ENCODE measurements at regions of chr17 and their contacts with region 1.

Region 1: DNA sequence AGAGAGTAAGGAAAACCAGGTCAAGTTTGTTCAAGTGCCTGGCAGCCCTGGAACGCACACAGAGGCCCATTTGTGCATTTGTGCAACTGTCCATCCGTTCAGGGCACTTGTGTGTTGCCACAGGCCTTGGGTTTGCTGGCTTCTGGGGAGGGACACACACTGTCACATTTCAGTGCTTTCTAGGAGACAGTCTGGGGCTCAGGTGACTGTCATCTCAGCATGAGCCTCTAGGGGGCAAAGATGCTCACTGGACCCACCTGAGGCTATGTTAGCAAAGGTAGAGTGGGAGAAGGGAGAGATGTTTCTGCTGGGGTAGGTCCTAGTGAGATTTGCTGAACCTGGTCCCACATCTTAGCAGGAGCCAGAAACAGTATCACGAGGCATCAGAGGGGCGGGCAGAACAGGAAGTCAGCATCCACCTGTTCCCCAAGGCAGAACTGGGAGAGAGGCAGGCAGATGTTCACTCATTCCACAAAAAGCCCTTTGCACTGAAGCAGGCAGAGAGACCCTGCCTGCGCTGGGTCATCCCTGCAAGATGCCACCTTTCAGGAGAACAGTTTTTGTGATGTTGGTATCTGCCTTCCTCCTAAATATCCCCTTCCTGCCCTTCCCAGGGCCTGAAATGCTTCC is 48.5 kb downstream of the RAI1 start:
- DNase-seq: peak; percentile 35 to 78 (median 60)
- ATAC-seq: peak; percentile 83
- H3K4me3 ChIP-seq: no peak overlapping the region
- H3K4me3 Mint-ChIP-seq: no peak overlapping the region
- H3K27ac ChIP-seq: no peak overlapping the region
- H3K27ac Mint-ChIP-seq: peak overlapping the region; percentile 40
- H3K4me1 ChIP-seq: peaks cover 20% of the 10 kb centered on the region
- H3K4me1 Mint-ChIP-seq: peaks cover 26% of the 10 kb centered on the region
- H3K27me3 ChIP-seq: no peaks in the 10 kb centered on the region
- H3K27me3 Mint-ChIP-seq: no peaks in the 10 kb centered on the region
- CTCF ChIP-seq: peak; percentile 77

Region 2: GRCh38 chr17:17701658-17702057 is 28.1 kb before region 1 on chr17:
- CTCF ChIA-PET with region 1: no interaction called
- POLR2A ChIA-PET with region 1: no interaction called
- intact Hi-C with region 1: no loop called
- DNase-seq: no peak
- ATAC-seq: no peak
- H3K4me3 ChIP-seq: no peak overlapping the region
- H3K4me3 Mint-ChIP-seq: no peak overlapping the region
- H3K27ac ChIP-seq: no peak overlapping the region
- H3K27ac Mint-ChIP-seq: no peak overlapping the region
- H3K4me1 ChIP-seq: peaks cover 13% of the 10 kb centered on the region
- H3K4me1 Mint-ChIP-seq: peaks cover 7% of the 10 kb centered on the region
- H3K27me3 ChIP-seq: no peaks in the 10 kb centered on the region
- H3K27me3 Mint-ChIP-seq: no peaks in the 10 kb centered on the region
- CTCF ChIP-seq: no peak

Region 3: GRCh38 chr17:17716837-17717523 is 12.8 kb before region 1 on chr17:
- CTCF ChIA-PET with region 1: no interaction called
- POLR2A ChIA-PET with region 1: no interaction called
- intact Hi-C with region 1: no loop called
- DNase-seq: no peak
- ATAC-seq: no peak
- H3K4me3 ChIP-seq: no peak overlapping the region
- H3K4me3 Mint-ChIP-seq: no peak overlapping the region
- H3K27ac ChIP-seq: no peak overlapping the region
- H3K27ac Mint-ChIP-seq: no peak overlapping the region
- H3K4me1 ChIP-seq: peaks cover 18% of the 10 kb centered on the region
- H3K4me1 Mint-ChIP-seq: peaks cover 48% of the 10 kb centered on the region
- H3K27me3 ChIP-seq: peaks cover 4 to 10% of the 10 kb centered on the region in 2 experiments
- H3K27me3 Mint-ChIP-seq: peaks cover 27% of the 10 kb centered on the region
- CTCF ChIP-seq: no peak

Region 4: DNA sequence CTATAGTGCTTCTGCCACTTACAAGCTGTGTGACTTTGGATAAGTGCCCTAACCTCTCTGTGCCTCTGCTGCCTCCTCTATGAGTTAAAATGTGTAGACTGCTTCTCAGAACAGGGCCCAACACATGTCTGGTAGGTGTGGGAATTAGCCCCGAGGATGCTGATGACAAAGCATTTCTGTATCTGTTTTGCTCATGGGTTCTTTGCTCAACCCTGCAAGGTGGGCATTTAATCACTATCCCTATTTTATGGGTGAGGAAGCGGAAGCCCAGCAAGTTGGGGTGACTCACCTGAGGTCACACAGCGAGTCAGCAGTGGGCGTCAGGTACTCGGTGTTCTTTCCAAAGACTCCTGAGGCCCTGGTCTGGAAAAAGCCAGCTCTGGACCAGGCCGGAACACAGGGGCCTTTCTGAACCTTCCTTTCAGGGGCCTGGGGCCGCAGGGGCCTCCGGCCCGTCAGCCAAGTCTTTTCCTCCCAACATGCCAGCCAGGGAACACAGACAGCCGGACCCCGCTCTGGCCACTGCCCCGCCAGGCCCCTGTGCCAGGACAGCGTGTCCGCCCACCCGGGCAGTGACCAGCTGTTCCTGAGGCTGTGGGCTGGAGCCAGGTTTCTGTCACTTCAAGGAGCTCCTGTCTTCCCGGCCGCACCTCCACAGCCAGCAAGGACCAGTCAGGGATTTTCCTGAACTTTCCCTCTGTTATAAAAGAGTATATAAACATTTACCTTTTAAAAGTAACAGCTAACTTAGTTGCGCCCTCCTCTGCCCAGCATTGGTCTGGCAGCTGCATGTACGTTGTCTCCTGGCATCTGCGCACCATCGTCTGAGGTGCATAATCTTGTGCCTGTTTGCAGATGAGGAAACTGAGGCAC is 44.5 kb after region 1 on chr17:
- CTCF ChIA-PET with region 1: no interaction called
- POLR2A ChIA-PET with region 1: no interaction called
- intact Hi-C with region 1: loop called in 1 of 2 experiments (anchors 5 kb)
- DNase-seq: peak in 1 of 14 experiments; percentile 32
- ATAC-seq: no peak
- H3K4me3 ChIP-seq: no peak overlapping the region
- H3K4me3 Mint-ChIP-seq: no peak overlapping the region
- H3K27ac ChIP-seq: no peak overlapping the region
- H3K27ac Mint-ChIP-seq: no peak overlapping the region
- H3K4me1 ChIP-seq: no peaks in the 10 kb centered on the region
- H3K4me1 Mint-ChIP-seq: no peaks in the 10 kb centered on the region
- H3K27me3 ChIP-seq: no peaks in the 10 kb centered on the region
- H3K27me3 Mint-ChIP-seq: no peaks in the 10 kb centered on the region
- CTCF ChIP-seq: peak; percentile 28

Region 5: DNA sequence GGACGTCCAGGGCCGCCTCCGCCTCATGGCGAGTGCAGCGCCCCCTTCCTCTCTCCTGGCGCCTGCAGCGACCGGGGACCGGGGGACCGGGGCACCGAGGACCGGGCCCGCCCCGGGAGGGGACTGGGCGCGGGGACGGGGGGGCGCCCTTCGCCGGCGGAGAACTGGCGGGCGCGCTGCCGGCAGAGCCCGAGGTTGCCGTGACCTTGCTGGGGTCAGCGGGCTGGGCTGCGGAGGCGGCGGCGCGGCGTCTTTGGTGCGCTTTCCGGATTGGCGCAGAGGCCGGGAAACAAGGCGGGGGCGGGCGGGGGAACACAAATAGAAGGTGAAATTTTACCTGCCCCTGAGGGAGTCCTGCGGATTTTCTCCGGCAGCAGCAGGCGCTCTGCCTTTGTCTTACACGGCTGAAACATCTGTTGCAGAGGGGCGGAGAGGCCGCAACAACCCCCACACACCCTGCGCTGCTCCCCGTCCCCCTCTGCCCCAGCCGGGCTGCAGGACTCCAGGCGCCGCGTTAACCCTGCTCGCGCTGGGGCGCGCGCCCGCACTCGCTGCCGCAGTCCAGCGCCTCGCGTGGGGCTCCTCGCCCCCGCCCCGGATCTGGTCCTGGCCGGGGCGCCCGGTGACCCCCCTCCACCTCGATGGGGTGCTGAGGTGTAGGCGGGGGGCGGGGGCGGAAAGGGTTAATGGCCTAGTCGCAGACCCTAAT is 53.5 kb after region 1 on chr17:
- CTCF ChIA-PET with region 1: interaction called, 4 read pairs
- POLR2A ChIA-PET with region 1: no interaction called
- intact Hi-C with region 1: loop called in 1 of 2 experiments (anchors 2 kb)
- DNase-seq: peak; percentile 32 to 79 (median 59)
- ATAC-seq: peak; percentile 63
- H3K4me3 ChIP-seq: peak overlapping the region; percentile 57
- H3K4me3 Mint-ChIP-seq: peak overlapping the region; percentile 91
- H3K27ac ChIP-seq: peak overlapping the region in 1 of 2 donors; percentile 29
- H3K27ac Mint-ChIP-seq: peak overlapping the region; percentile 77
- H3K4me1 ChIP-seq: peaks cover 31% of the 10 kb centered on the region
- H3K4me1 Mint-ChIP-seq: peaks cover 30% of the 10 kb centered on the region
- H3K27me3 ChIP-seq: peaks cover 0 to 5% of the 10 kb centered on the region in 2 experiments
- H3K27me3 Mint-ChIP-seq: no peaks in the 10 kb centered on the region
- CTCF ChIP-seq: peak; percentile 22

Region 6: GRCh38 chr17:17859909-17860765 is 130.4 kb after region 1 on chr17:
- CTCF ChIA-PET with region 1: no interaction called
- POLR2A ChIA-PET with region 1: no interaction called
- intact Hi-C with region 1: loop called (anchors 1 to 2 kb)
- DNase-seq: peak; percentile 53 to 86 (median 65)
- ATAC-seq: peak; percentile 97
- H3K4me3 ChIP-seq: no peak overlapping the region
- H3K4me3 Mint-ChIP-seq: no peak overlapping the region
- H3K27ac ChIP-seq: no peak overlapping the region
- H3K27ac Mint-ChIP-seq: no peak overlapping the region
- H3K4me1 ChIP-seq: peaks cover 29% of the 10 kb centered on the region
- H3K4me1 Mint-ChIP-seq: peaks cover 34% of the 10 kb centered on the region
- H3K27me3 ChIP-seq: no peaks in the 10 kb centered on the region
- H3K27me3 Mint-ChIP-seq: no peaks in the 10 kb centered on the region
- CTCF ChIP-seq: peak; percentile 97